ENCODE measurements at regions of chr11 and their contacts with region 1.

Region 1: GRCh38 chr11:43250309-43250708 is 61.5 kb upstream of the API5 start:
- DNase-seq: no peak
- H3K4me3 ChIP-seq: no peak overlapping the region
- H3K27ac ChIP-seq: no peak overlapping the region
- H3K27me3 ChIP-seq: peaks cover 0 to 3% (median 0%) of the 10 kb centered on the region in 45 donors
- CTCF ChIP-seq: no peak

Region 2: GRCh38 chr11:43145653-43146052 is 104.7 kb before region 1 on chr11:
- intact Hi-C with region 1: loop called in 1 of 2 experiments (anchors 5 kb)
- DNase-seq: no peak
- H3K4me3 ChIP-seq: no peak overlapping the region
- H3K27ac ChIP-seq: no peak overlapping the region
- H3K27me3 ChIP-seq: no peaks in the 10 kb centered on the region
- CTCF ChIP-seq: no peak

Region 3: GRCh38 chr11:43601511-43601910 is 351.2 kb after region 1 on chr11:
- intact Hi-C with region 1: no loop called
- DNase-seq: no peak
- H3K4me3 ChIP-seq: no peak overlapping the region
- H3K27ac ChIP-seq: no peak overlapping the region
- H3K27me3 ChIP-seq: peaks cover 0 to 12% (median 0%) of the 10 kb centered on the region in 45 donors
- CTCF ChIP-seq: no peak